ENCODE measurements at regions of chr21 and their contacts with region 1.

Region 1: DNA sequence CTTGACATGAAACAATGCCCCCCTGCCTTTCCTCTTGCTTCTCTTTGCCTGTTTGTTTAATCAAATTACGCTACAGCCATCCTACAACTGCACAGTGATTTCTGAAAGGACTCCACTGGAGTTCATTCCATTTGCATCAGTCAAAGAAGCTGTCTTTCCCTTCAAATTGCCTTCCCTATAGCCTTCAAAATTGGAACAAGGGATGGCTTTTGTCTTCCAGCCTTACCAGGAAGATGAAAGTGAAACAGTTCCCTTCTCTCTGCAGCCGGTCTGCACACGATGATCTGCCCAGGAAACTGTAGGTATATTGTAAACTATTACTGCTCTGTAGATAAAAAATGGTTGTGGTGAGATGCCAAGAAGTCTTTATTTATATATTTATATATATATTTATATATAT is 65.6 kb upstream of the ETS2 start:
- DNase-seq: peak; percentile 29 to 77 (median 72)
- H3K4me3 ChIP-seq: peak overlapping the region in 4 of 7 experiments; percentile 16 to 56 (median 43)
- H3K27ac ChIP-seq: no peak overlapping the region
- H3K4me1 ChIP-seq: peaks cover 8 to 26% (median 18%) of the 10 kb centered on the region in 4 experiments
- H3K27me3 ChIP-seq: no peaks in the 10 kb centered on the region

Region 2: GRCh38 chr21:38751379-38752050 is 11.4 kb after region 1 on chr21:
- CTCF ChIA-PET with region 1: interaction called, 12 read pairs
- POLR2A ChIA-PET with region 1: interaction called, 4 read pairs
- DNase-seq: peak; percentile 69 to 94 (median 91)
- H3K4me3 ChIP-seq: peak overlapping the region in 4 of 7 experiments; percentile 3 to 50 (median 24)
- H3K27ac ChIP-seq: peak overlapping the region; percentile 30 to 50
- H3K4me1 ChIP-seq: peaks cover 12 to 61% (median 44%) of the 10 kb centered on the region in 4 experiments
- H3K27me3 ChIP-seq: no peaks in the 10 kb centered on the region

Measured in common myeloid progenitor, CD34-positive (primary cell).